CD14-positive monocyte (primary cell): ENCODE measurements at regions of chr12 and their contacts with region 1.

Region 1: GRCh38 chr12:11067514-11067913 is 5.4 kb upstream of the TAS2R46 start:
- DNase-seq: no peak
- H3K4me3 ChIP-seq: no peak overlapping the region
- H3K4me3 Mint-ChIP-seq: no peak overlapping the region
- H3K27ac ChIP-seq: no peak overlapping the region
- H3K27ac Mint-ChIP-seq: no peak overlapping the region
- H3K4me1 ChIP-seq: no peaks in the 10 kb centered on the region
- H3K4me1 Mint-ChIP-seq: no peaks in the 10 kb centered on the region
- H3K27me3 ChIP-seq: no peaks in the 10 kb centered on the region
- H3K27me3 Mint-ChIP-seq: no peaks in the 10 kb centered on the region
- CTCF ChIP-seq: no peak

Region 2: DNA sequence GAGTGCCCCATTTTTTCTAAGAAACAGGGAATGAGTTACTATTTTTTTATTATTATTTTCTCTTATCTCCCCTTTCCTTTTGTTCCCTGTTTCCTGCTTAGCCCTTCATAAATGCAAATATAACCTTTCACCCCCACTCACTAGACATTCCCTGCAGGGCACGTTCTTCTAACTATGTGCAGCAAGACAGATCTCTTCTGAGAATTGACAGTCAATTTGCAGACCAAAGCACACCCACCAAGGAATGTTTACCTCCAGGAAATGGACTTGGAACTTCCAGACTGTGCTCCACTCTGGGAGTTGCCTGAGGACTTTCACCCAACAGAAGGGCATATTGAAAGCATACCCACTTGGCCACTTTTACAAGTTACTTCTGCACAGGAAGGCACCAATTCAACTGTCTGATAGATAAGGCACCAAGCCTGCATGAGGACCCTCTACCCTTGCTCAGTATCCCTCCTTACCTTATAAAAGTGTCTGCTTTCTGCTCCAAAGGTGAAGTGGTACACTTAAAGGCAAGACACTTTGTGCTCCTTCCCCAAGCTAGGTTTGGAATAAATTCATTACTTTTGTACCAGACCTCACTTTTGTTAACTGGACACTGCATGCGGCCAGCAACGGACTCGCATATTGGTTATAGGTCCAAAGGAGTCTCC is 51.6 kb before region 1 on chr12:
- intact Hi-C with region 1: loop called (anchors 1 to 2 kb)
- DNase-seq: no peak
- H3K4me3 ChIP-seq: no peak overlapping the region
- H3K4me3 Mint-ChIP-seq: no peak overlapping the region
- H3K27ac ChIP-seq: no peak overlapping the region
- H3K27ac Mint-ChIP-seq: no peak overlapping the region
- H3K4me1 ChIP-seq: no peaks in the 10 kb centered on the region
- H3K4me1 Mint-ChIP-seq: no peaks in the 10 kb centered on the region
- H3K27me3 ChIP-seq: no peaks in the 10 kb centered on the region
- H3K27me3 Mint-ChIP-seq: no peaks in the 10 kb centered on the region
- CTCF ChIP-seq: no peak